RWPE1 (cell line): ENCODE measurements at regions of chr1 and their contacts with region 1.

Region 1: GRCh38 chr1:155091071-155091709 is 12.6 kb downstream of the EFNA3 start:
- DNase-seq: peak; percentile 57
- H3K27ac ChIP-seq: no peak overlapping the region
- CTCF ChIP-seq: peak; percentile 95

Region 2: GRCh38 chr1:154925335-154926170 is 165.6 kb before region 1 on chr1:
- CTCF ChIA-PET with region 1: no interaction called
- POLR2A ChIA-PET with region 1: no interaction called
- DNase-seq: no peak
- H3K27ac ChIP-seq: peak overlapping the region; percentile 28
- CTCF ChIP-seq: no peak

Region 3: DNA sequence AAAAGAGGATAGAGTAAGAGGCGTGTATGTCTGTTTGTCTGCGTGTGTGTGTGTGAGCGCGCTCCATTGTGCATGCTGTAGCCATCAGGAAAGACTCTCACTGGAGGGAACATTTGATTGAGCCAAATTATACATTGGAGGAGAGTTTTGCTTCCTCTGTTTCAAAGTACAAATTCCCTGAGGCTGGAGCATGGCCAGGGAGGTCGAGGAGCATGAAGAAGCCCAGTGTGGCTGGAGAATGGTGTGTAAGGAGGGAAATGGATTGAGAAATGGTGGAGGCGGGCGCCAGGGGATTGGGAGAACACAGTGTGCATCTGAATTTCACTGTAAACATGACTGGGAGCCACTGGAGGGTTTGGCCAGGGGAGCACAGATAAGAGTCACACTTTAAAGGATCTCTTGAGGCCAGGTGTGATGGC is 14.4 kb after region 1 on chr1:
- CTCF ChIA-PET with region 1: interaction called, 10 read pairs
- POLR2A ChIA-PET with region 1: no interaction called
- DNase-seq: no peak
- H3K27ac ChIP-seq: no peak overlapping the region
- CTCF ChIP-seq: no peak

Region 4: GRCh38 chr1:155127105-155127964 is 36.1 kb after region 1 on chr1 and contains the start of gene EFNA1:
- CTCF ChIA-PET with region 1: interaction called, 14 read pairs
- POLR2A ChIA-PET with region 1: no interaction called
- DNase-seq: no peak
- H3K27ac ChIP-seq: peak within 1 kb of the TSS; percentile 98
- CTCF ChIP-seq: no peak

Region 5: DNA sequence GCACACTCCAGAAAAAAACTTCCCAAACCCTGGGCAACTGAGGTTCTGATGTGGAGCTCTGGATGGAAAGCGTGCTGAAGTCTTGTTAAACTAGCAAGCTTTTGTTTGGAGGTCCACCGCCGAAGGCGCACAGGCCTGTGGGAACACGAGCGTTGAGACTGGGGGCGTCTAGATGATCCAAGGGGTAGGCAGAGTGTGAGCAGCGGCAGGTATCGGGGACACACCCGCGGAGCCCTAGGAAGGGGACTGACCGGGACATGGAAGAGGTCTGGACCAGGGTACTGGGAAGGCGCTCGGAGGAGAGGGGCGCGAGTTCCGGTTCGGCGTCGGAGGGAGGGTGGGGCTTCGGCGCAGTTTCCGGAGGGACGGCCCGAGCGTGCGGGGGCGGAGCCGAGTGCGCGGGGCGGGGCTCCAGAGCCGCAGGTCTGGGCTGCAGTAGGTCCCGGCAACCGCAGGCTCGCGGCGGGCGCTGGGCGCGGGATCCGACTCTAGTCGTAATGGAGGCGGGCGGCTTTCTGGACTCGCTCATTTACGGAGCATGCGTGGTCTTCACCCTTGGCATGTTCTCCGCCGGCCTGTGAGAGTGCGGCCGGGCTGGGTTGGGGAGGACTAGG is 44.3 kb after region 1 on chr1 and contains the start of gene SLC50A1:
- CTCF ChIA-PET with region 1: interaction called, 11 read pairs
- POLR2A ChIA-PET with region 1: no interaction called
- DNase-seq: peak; percentile 90
- H3K27ac ChIP-seq: peak within 1 kb of the TSS; percentile 99
- CTCF ChIP-seq: no peak

Region 6: DNA sequence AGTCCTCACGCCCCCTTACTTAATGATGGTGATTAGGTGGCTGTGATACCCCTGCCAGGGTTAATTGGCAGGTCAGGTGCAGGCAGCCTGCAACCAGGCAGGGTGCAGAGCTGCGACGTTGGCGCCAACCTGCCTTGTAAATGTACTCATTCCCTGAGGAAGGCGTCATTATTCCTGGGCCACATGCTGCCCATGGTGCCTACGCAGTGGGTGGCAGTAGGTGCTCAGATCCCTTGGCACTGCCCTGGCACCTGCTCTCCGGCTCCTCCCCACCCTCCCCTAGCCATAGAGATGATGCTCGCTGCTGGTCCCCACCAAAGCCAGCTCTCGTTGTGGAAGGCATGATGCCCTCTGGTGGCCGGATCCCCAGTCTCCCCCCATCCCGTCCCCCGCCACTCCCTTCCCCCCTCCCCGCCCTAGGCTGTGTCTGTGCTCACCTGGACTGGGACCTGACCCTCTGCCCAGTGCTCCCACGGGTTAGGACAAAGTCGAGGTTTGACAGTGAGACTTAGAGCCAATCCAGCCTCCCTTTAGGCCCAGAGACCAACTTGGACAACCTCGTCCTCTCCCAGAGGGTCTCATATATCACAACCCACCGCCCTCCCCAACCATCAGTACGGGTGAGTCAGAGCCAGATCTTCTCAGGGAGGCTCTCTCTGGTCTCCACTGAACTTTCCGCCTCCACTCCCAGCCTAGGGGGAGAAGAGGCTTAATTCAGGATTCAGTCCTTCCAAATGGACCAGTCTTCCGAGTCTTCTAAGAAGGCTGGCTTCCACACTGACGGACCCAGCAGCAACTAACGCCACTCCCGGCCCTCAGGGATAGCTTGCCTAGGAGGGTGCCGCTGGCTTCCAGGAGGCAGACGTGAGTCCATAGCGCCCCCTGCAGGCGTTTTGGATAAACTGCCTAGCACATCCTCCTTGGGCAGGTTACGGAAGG is 76.2 kb after region 1 on chr1:
- CTCF ChIA-PET with region 1: interaction called, 29 read pairs
- POLR2A ChIA-PET with region 1: no interaction called
- DNase-seq: peak; percentile 72
- H3K27ac ChIP-seq: peak overlapping the region; percentile 59
- CTCF ChIP-seq: peak; percentile 80

Region 7: GRCh38 chr1:155172732-155173477 is 81.7 kb after region 1 on chr1 and contains the start of gene KRTCAP2:
- CTCF ChIA-PET with region 1: interaction called, 29 read pairs
- POLR2A ChIA-PET with region 1: no interaction called
- DNase-seq: peak; percentile 98
- H3K27ac ChIP-seq: peak within 1 kb of the TSS; percentile 87
- CTCF ChIP-seq: peak; percentile 93

Region 8: DNA sequence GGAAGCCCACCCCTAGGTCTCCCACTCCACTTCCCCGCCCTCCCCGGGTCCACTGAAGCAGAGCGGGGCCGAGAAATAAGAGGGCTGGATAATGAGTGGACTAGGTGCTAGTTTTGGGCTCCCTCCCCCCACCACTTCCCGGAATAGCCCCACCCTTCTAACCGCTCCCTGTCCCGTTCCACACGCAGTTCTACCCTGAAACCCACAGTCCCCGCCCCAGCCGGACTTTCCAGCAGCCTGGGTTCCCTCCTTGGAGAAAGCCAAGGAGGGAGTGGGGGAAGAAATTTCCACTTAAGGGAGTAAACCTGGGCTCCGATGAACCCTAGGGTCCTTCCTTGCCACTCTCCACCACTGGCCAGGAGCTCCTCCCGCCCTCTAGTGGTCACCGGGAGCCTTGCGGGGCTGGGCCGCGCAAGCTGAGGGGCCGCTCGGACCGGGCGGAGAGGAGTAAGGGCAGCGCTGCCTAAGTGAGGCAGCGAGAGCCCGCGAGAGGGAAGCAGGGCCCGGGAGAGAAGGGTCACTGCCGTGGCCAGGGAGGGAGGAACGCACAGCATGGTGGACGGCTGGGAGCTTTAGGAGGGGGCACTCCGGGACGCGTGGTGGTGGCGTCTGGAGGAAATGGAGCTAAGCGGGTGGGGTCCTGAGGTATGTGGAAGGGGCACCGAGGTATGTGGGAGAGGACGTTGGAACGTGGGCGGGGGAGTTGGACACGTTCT is 102.2 kb after region 1 on chr1:
- CTCF ChIA-PET with region 1: interaction called, 10 read pairs
- POLR2A ChIA-PET with region 1: no interaction called
- DNase-seq: peak; percentile 87
- H3K27ac ChIP-seq: peak overlapping the region; percentile 99
- CTCF ChIP-seq: peak; percentile 97